ENCODE measurements at regions of chr21 and their contacts with region 1.

Region 1: DNA sequence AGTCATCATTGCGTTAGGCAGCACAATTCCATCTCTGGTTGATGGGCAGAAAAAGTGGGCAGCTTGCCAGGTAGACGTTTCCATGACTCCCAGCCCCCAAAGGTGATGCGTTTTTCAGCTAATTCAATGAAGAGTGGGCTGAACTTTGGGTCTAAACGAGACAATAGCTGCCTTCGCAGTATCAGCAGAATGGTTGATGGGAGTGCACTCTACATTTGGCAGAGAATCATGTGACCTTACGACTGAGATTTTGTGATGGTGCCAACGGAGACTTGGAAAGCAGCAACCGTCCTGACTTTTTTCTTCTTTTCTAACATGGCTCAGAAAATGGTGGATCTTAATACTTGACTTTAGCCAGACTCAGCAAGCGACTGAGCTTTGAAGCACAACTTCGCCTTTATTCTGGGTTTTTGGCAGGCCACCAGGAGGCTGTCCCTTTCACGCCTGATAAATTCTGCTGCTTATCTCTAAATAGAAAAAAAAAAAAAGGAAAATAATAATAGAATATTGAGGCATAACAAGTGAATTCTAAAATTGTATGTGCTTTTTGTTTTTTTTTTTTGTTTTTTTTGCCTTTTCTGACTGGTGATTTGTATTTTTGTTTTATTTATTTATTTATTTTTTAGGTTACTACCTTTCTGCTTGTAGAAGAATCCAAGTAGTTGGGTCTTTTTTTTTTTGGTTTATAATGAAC is 804.8 kb downstream of the USP25 start:
- DNase-seq: peak; percentile 32
- ATAC-seq: no peak
- H3K4me3 ChIP-seq: peak overlapping the region; percentile 32
- H3K27ac ChIP-seq: no peak overlapping the region
- H3K4me1 ChIP-seq: peaks cover 3% of the 10 kb centered on the region; the same call in 1 of the 2 replicates
- H3K27me3 ChIP-seq: no peaks in the 10 kb centered on the region
- CTCF ChIP-seq: no peak
- POLR2A ChIP-seq: no peak
- RAD21 ChIP-seq: no peak

Region 2: DNA sequence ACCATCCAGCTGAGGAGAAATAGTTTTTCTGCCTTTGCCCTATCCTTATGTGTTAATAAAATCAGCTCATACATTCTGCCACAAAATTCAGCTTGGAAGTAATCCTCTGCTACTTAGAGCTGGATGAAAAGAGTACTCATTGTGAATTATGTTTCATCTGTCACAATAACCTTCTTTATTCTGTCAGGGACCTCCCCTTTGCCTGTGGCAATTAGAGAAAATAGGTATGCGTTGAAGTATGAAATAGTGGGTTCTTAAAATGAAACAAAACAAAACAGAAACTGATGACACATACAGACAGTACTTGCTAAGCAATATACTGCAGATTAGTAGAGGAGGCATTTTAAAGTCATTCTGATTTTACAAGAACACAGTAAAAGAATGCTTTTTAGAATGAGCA is 226.3 kb before region 1 on chr21:
- CTCF ChIA-PET with region 1: no interaction called
- POLR2A ChIA-PET with region 1: no interaction called
- dilution Hi-C with region 1: no loop called
- in situ Hi-C with region 1: no loop called
- intact Hi-C with region 1: no loop called
- DNase-seq: peak; percentile 15
- ATAC-seq: 0 out of 2 replicates have a peak, but pooled peaks have one; percentile 27
- H3K4me3 ChIP-seq: no peak overlapping the region
- H3K27ac ChIP-seq: no peak overlapping the region
- H3K4me1 ChIP-seq: no peaks in the 10 kb centered on the region
- H3K27me3 ChIP-seq: no peaks in the 10 kb centered on the region
- CTCF ChIP-seq: no peak
- POLR2A ChIP-seq: no peak
- RAD21 ChIP-seq: no peak

Region 3: DNA sequence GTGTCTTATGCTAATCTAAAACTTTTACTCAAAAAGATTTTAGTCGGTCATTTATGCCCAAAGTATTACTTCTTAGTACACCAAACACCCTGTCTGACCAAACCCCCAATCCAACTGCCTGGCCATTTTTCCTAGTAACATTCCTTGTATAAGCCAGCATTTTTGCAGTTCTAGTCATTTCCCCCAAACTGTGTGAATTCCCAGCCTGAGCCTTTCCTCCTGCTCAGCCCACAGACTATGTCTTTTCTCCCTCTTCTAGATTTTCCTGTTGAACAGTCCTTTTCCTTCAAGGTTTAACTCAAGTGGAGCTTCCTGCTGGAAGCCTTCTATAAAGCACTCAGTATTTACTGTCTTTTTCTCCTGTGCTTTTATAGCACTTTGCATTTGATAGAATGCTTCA is 39.0 kb after region 1 on chr21:
- CTCF ChIA-PET with region 1: no interaction called
- POLR2A ChIA-PET with region 1: no interaction called
- dilution Hi-C with region 1: no loop called
- in situ Hi-C with region 1: no loop called
- intact Hi-C with region 1: loop called (anchors 5 kb)
- DNase-seq: peak; percentile 76
- ATAC-seq: peak; percentile 86
- H3K4me3 ChIP-seq: no peak overlapping the region
- H3K27ac ChIP-seq: 0 out of 2 replicates have a peak overlapping the region, but pooled peaks have one; percentile 40
- H3K4me1 ChIP-seq: peaks cover 8% of the 10 kb centered on the region; the same call in 1 of the 2 replicates
- H3K27me3 ChIP-seq: no peaks in the 10 kb centered on the region
- CTCF ChIP-seq: no peak
- POLR2A ChIP-seq: no peak
- RAD21 ChIP-seq: no peak

Region 4: GRCh38 chr21:16588433-16588860 is 53.9 kb after region 1 on chr21:
- CTCF ChIA-PET with region 1: no interaction called
- POLR2A ChIA-PET with region 1: no interaction called
- dilution Hi-C with region 1: no loop called
- in situ Hi-C with region 1: no loop called
- intact Hi-C with region 1: loop called (anchors 5 kb)
- DNase-seq: peak; percentile 84
- ATAC-seq: peak; percentile 98
- H3K4me3 ChIP-seq: peak overlapping the region; percentile 46
- H3K27ac ChIP-seq: no peak overlapping the region
- H3K4me1 ChIP-seq: peaks cover 6% of the 10 kb centered on the region; the same call in 1 of the 2 replicates
- H3K27me3 ChIP-seq: no peaks in the 10 kb centered on the region
- CTCF ChIP-seq: no peak
- POLR2A ChIP-seq: no peak; the same call in 1 of the 2 replicates
- RAD21 ChIP-seq: 0 out of 2 replicates have a peak, but pooled peaks have one; percentile 14

Region 5: DNA sequence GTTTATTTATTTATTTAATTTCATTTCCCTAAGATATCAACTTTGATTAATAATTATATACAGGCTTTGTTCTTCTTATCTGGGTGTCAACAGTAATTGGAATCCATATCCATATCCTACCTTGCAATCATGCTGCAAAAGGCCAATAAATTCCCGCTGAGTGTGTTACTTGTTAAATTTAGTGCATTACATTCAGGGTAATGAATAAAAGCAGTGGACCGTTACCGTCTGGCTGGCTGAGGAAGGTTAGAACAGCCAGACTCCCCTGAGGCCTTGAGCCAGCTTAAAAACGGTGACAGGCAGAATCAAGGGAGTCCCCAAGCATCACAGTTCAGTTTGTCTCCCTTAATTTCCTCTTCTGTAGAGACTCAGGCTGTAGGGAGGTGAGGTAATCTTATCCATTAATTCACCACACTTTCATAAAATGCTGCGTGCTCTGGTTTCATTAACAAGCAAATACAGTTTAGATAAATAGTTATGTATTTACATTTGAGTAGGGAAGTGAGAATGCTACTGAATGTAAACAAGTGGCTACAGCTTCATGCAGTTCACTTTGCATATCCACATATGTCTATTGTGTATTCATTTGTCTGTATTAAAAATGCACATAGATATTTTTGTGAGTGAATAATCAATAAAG is 90.0 kb after region 1 on chr21:
- CTCF ChIA-PET with region 1: no interaction called
- POLR2A ChIA-PET with region 1: no interaction called
- dilution Hi-C with region 1: no loop called
- in situ Hi-C with region 1: no loop called
- intact Hi-C with region 1: no loop called
- DNase-seq: no peak
- ATAC-seq: no peak
- H3K4me3 ChIP-seq: no peak overlapping the region
- H3K27ac ChIP-seq: no peak overlapping the region
- H3K4me1 ChIP-seq: no peaks in the 10 kb centered on the region
- H3K27me3 ChIP-seq: no peaks in the 10 kb centered on the region
- CTCF ChIP-seq: no peak
- POLR2A ChIP-seq: no peak
- RAD21 ChIP-seq: no peak

Measured in IMR-90 (cell line).